ENCODE measurements at regions of chr12 and their contacts with region 1.

Region 1: GRCh38 chr12:4148418-4149056 is 125.0 kb upstream of the CCND2 start:
- DNase-seq: peak; percentile 72
- H3K4me3 Mint-ChIP-seq: no peak overlapping the region
- H3K27ac Mint-ChIP-seq: peak overlapping the region; percentile 53
- H3K4me1 Mint-ChIP-seq: peaks cover 86% of the 10 kb centered on the region
- H3K27me3 Mint-ChIP-seq: no peaks in the 10 kb centered on the region

Region 2: DNA sequence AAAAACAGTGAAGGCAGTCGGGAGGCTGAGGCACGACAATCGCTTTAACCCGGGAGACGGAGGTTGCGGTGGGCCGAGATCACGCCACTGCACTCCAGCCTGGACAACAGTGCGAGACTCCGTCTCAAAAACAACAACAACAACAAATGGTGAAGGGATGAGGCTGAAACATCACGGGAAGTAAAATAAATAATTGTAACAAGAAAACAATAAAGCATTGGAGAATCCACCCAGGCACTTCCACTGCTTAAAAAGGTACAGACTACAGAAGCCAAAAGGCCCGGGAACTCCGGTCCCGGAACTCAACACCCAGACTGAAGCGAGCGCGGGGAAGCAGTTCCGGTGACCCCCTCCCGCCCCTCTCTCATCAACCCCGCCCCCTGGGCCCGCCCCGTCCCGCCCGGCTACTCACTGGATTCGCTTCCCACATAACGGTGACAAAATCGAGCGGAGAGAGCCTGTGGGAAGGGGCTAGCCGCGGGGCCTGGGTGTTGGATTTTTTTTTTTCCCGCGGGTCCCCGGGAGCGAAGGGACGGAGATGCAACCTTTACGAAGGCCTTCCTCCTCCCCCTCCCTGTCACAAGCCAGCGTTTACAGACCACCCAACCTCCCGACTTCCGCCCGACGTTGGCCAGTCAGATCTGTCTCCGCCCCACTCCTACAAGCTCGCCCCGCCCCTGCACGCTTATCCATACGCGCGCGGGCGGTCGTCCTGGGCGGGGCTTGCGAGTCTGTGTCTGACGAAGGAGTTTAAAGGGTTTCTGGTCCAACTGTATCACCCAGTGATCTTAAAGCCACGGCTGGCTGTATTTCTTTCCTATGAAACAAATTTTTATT is 275.5 kb before region 1 on chr12 and contains the start of gene PARP11:
- CTCF ChIA-PET with region 1: no interaction called
- POLR2A ChIA-PET with region 1: no interaction called
- intact Hi-C with region 1: loop called (anchors 2 kb)
- DNase-seq: peak; percentile 98
- H3K4me3 Mint-ChIP-seq: peak within 1 kb of the TSS; percentile 91
- H3K27ac Mint-ChIP-seq: peak within 1 kb of the TSS; percentile 97
- H3K4me1 Mint-ChIP-seq: peaks cover 46% of the 10 kb centered on the region
- H3K27me3 Mint-ChIP-seq: no peaks in the 10 kb centered on the region
- total RNA-seq, gene PARP11: 16.6 to 17.8 TPM

Region 3: GRCh38 chr12:4118017-4118510 is 30.5 kb before region 1 on chr12:
- CTCF ChIA-PET with region 1: interaction called, 10 read pairs
- POLR2A ChIA-PET with region 1: interaction called, 36 read pairs
- intact Hi-C with region 1: loop called (anchors 1 kb)
- DNase-seq: no peak
- H3K4me3 Mint-ChIP-seq: peak overlapping the region; percentile 33
- H3K27ac Mint-ChIP-seq: peak overlapping the region; percentile 79
- H3K4me1 Mint-ChIP-seq: peaks cover 59% of the 10 kb centered on the region
- H3K27me3 Mint-ChIP-seq: peaks cover 8% of the 10 kb centered on the region

Region 4: GRCh38 chr12:4164559-4165558 is 16.3 kb after region 1 on chr12:
- CTCF ChIA-PET with region 1: interaction called, 21 read pairs
- POLR2A ChIA-PET with region 1: interaction called, 14 read pairs
- intact Hi-C with region 1: loop called (anchors 1 kb)
- DNase-seq: peak; percentile 78
- H3K4me3 Mint-ChIP-seq: peak overlapping the region; percentile 79
- H3K27ac Mint-ChIP-seq: peak overlapping the region; percentile 90
- H3K4me1 Mint-ChIP-seq: peaks cover 49% of the 10 kb centered on the region
- H3K27me3 Mint-ChIP-seq: no peaks in the 10 kb centered on the region

Region 5: GRCh38 chr12:4178424-4179170 is 30.1 kb after region 1 on chr12:
- CTCF ChIA-PET with region 1: interaction called, 7 read pairs
- POLR2A ChIA-PET with region 1: interaction called, 11 read pairs
- intact Hi-C with region 1: loop called (anchors 1 kb)
- DNase-seq: peak; percentile 39
- H3K4me3 Mint-ChIP-seq: peak overlapping the region; percentile 27
- H3K27ac Mint-ChIP-seq: peak overlapping the region; percentile 76
- H3K4me1 Mint-ChIP-seq: peaks cover 20% of the 10 kb centered on the region
- H3K27me3 Mint-ChIP-seq: peaks cover 2% of the 10 kb centered on the region

Region 6: DNA sequence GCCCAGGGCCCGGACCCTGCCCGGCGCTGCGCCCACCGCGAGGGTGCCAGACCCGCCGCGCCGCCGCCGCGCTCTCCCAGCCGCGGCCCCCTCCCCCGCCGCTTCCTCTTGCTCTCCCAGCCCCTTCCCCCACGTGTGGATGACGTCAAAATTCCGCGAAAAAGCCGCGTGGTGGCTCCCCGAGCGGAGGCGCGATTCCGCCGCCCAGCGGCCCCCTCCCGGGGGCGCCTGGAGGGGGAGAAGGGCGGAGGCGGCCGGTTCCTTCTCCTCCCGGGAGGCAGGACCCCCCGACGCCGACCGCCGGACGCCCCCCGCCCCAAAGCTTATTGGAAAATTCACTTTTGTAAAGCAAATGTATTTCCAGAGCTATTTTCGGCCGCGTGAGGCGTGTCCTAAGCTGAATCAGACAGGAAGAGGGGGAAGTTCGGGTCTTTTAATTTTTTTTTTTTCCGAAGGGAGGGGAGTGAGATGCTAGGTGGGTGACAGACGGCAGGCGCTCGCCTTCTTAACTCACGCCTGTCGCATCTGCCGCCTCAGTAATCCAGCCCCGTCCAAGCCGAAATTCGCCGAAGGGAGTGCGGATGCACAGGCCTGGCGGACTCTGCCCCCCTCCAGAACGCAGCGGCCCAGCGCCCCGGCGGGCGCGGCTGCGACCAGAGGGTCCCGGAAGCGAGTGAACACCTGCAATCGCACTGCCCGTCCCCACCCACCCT is 120.9 kb after region 1 on chr12:
- CTCF ChIA-PET with region 1: interaction called, 76 read pairs
- POLR2A ChIA-PET with region 1: interaction called, 205 read pairs
- intact Hi-C with region 1: loop called (anchors 1 kb)
- DNase-seq: peak; percentile 96
- H3K4me3 Mint-ChIP-seq: peak overlapping the region; percentile 97
- H3K27ac Mint-ChIP-seq: peak overlapping the region; percentile 99
- H3K4me1 Mint-ChIP-seq: peaks cover 20% of the 10 kb centered on the region
- H3K27me3 Mint-ChIP-seq: no peaks in the 10 kb centered on the region

Measured in activated CD4-positive, alpha-beta memory T cell treated with anti-CD3 and anti-CD28 coated beads for 36 hours (primary cell).